ENCODE measurements at regions of chr2 and their contacts with region 1.

Region 1: DNA sequence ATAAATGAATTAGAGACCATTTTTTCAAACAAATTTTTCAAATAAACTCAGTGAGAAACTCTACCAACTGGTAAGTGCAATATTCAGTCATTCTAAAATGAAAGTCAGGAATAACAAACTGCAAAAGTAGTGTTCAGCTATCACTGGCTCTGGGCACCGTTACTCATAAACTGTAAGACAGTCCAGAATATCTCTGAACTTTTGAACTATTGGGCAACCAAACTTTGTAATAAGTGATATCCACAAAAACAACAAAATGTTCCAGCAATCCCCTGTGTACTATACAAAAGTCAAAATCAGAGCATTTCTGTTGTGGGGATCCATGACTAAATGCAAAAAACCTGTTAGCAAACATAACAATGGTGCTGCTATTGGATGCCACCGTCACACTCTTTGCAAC is 56.3 kb downstream of the SLC25A12 start:
- DNase-seq: no peak
- H3K4me3 ChIP-seq: no peak overlapping the region
- H3K27me3 ChIP-seq: no peaks in the 10 kb centered on the region
- CTCF ChIP-seq: no peak

Region 2: DNA sequence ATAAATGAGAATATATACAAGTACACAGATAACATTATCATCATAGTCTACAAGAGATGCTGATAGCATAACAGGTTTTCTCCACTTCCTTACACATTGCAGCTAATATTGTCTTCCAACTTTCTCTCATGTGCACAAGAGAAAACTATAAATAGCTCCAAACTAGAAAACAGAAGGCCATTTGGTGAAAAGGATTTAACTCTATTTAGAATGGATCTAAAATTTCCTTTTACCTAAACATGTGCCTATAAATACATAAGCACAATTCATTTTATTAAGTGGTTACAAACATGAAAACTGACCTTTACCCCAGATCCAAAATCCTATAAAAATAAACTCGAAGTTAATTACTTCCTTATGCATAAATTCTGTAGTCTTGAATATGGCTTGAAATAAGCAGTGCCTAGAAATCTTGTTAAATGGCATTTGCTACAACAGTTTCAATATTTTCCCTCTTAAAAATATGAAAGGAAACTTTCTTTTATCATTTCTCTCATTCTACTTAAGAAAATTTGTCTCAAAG is 14.7 kb after region 1 on chr2:
- CTCF ChIA-PET with region 1: interaction called, 4 read pairs
- POLR2A ChIA-PET with region 1: interaction called, 16 read pairs
- DNase-seq: no peak
- H3K4me3 ChIP-seq: no peak overlapping the region
- H3K27me3 ChIP-seq: no peaks in the 10 kb centered on the region
- CTCF ChIP-seq: no peak